ENCODE measurements at regions of chr5 and their contacts with region 1.

Region 1: DNA sequence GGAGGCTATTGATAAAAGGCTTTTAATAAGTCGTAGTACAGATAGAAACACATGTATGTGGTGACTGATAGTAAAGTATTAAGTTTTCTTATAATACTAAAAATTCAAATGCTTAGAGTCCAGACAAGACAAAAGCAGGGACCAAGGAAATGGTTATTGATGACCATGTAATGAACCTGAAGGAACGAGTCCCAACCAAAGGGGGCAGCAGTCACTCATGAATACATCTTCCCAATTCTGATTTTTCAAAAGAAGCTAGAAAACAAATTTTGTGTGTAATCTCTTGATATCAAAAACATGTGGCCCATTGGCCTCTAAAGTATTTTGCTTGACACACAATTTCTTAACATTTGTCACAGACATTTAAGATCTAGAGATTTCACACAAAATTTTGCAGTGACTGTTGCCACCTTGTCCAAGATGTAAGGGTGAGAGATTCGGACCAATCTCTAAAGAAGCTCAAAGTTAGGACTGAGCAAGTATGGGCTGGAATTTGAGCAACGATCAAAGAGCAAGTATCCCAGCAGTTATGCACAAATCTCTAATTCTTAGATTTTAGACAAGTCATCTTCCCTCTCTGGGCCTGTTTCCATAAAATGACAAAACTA is 66.8 kb downstream of the ARL15 start:
- DNase-seq: peak; percentile 63
- H3K4me3 ChIP-seq: no peak overlapping the region
- H3K27ac ChIP-seq: no peak overlapping the region
- H3K4me1 ChIP-seq: no peaks in the 10 kb centered on the region
- H3K27me3 ChIP-seq: no peaks in the 10 kb centered on the region
- CTCF ChIP-seq: peak; percentile 84

Region 2: GRCh38 chr5:53631251-53631650 is 612.3 kb before region 1 on chr5:
- CTCF ChIA-PET with region 1: no interaction called
- POLR2A ChIA-PET with region 1: no interaction called
- intact Hi-C with region 1: no loop called
- DNase-seq: no peak
- H3K4me3 ChIP-seq: no peak overlapping the region
- H3K27ac ChIP-seq: no peak overlapping the region
- H3K4me1 ChIP-seq: no peaks in the 10 kb centered on the region
- H3K27me3 ChIP-seq: no peaks in the 10 kb centered on the region
- CTCF ChIP-seq: no peak

Region 3: DNA sequence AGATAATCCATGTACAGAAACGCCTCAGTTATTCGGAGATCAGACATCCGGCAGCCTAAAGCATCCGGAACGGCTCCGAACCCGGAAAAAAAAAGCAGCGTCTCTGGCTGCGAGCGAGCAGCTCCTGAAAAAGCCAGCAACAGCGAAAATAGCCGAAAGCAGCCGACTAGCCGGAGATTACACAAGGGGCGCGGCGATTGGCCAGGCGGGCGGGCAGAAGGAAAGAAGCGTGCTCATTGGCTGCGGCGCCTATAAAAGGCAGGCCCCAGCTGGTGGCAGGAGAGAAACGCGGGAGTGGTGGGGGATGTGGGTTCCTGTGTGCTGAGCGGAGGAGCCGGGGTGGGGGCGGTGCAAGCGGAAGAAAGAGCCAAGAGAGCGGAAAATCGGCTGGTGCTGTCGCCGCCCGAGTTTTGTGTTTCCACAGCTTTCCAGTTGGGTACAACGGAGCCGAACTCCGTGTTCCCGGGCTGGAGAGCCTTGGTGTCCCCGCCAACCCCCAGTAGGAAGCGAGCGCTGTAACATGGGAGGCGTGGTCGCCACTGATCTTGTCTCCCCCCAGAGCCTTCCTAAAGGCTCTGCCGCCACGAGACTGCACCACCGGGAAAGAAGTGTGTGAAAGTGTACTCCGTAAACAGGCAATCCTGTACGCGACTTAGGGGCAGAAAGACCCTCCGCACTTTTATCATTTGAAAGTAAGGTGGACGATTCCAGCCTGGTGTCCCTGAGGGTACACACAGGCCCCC is 67.0 kb after region 1 on chr5 and contains the start of gene ARL15:
- CTCF ChIA-PET with region 1: interaction called, 4 read pairs
- POLR2A ChIA-PET with region 1: interaction called, 10 read pairs
- intact Hi-C with region 1: no loop called
- DNase-seq: peak; percentile 99
- H3K4me3 ChIP-seq: peak within 1 kb of the TSS; percentile 69
- H3K27ac ChIP-seq: peak within 1 kb of the TSS; percentile 76
- H3K4me1 ChIP-seq: no peaks in the 10 kb centered on the region
- H3K27me3 ChIP-seq: no peaks in the 10 kb centered on the region
- CTCF ChIP-seq: no peak
- total RNA-seq, gene ARL15: 17.2 and 18.3 TPM in 2 replicates

Region 4: GRCh38 chr5:54415896-54416601 is 172.5 kb after region 1 on chr5:
- CTCF ChIA-PET with region 1: interaction called, 18 read pairs
- POLR2A ChIA-PET with region 1: no interaction called
- intact Hi-C with region 1: loop called (anchors 2 kb)
- DNase-seq: no peak
- H3K4me3 ChIP-seq: no peak overlapping the region
- H3K27ac ChIP-seq: no peak overlapping the region
- H3K4me1 ChIP-seq: no peaks in the 10 kb centered on the region
- H3K27me3 ChIP-seq: no peaks in the 10 kb centered on the region
- CTCF ChIP-seq: no peak

Region 5: DNA sequence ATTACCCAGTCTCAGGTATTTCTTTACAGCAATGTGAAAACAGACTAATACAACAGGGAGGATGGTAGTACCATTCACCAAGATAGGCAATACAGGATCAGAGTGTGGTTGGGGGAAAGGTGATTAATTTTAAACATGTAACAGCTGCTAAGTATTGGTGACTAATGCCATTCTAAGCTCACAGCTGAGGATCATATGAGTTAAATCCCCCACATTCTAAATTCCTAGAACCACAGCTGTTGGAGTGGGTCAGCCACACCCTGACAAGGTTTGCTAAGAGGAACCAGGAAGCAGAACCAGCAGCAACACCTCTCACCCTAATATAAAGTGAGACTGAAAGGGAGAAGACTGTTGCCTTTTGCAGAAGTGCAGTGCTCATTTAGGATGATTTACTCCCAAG is 236.7 kb after region 1 on chr5:
- CTCF ChIA-PET with region 1: no interaction called
- POLR2A ChIA-PET with region 1: no interaction called
- intact Hi-C with region 1: loop called (anchors 5 kb)
- DNase-seq: no peak
- H3K4me3 ChIP-seq: no peak overlapping the region
- H3K27ac ChIP-seq: no peak overlapping the region
- H3K4me1 ChIP-seq: no peaks in the 10 kb centered on the region
- H3K27me3 ChIP-seq: no peaks in the 10 kb centered on the region
- CTCF ChIP-seq: no peak

Region 6: DNA sequence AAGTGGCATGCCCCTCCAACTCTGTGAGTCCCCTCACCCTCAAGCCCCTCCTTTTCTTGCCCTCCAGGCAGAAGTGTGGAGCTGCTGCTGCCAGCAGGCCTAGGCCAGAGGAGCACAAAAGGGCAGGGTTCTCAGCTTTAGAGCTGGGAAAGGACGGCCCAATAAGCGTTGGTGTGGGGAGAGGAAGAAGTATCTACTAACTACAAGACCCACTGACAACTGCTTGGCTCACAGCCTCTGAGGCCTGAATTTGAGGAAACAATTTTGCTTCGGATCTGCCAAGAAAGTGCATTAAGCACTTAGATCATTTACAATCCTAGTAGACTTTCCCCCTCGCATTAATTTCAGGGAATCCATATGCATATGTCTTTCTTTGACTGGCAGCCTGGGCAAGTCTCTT is 453.4 kb after region 1 on chr5:
- CTCF ChIA-PET with region 1: no interaction called
- POLR2A ChIA-PET with region 1: no interaction called
- intact Hi-C with region 1: no loop called
- DNase-seq: peak; percentile 63
- H3K4me3 ChIP-seq: no peak overlapping the region
- H3K27ac ChIP-seq: peak overlapping the region; percentile 41
- H3K4me1 ChIP-seq: peaks cover 51% of the 10 kb centered on the region
- H3K27me3 ChIP-seq: no peaks in the 10 kb centered on the region
- CTCF ChIP-seq: no peak

Region 7: GRCh38 chr5:54867310-54867944 is 623.9 kb after region 1 on chr5:
- CTCF ChIA-PET with region 1: interaction called, 15 read pairs
- POLR2A ChIA-PET with region 1: no interaction called
- intact Hi-C with region 1: no loop called
- DNase-seq: peak; percentile 87
- H3K4me3 ChIP-seq: no peak overlapping the region
- H3K27ac ChIP-seq: peak overlapping the region; percentile 2
- H3K4me1 ChIP-seq: peaks cover 9% of the 10 kb centered on the region
- H3K27me3 ChIP-seq: no peaks in the 10 kb centered on the region
- CTCF ChIP-seq: peak; percentile 78

Region 8: DNA sequence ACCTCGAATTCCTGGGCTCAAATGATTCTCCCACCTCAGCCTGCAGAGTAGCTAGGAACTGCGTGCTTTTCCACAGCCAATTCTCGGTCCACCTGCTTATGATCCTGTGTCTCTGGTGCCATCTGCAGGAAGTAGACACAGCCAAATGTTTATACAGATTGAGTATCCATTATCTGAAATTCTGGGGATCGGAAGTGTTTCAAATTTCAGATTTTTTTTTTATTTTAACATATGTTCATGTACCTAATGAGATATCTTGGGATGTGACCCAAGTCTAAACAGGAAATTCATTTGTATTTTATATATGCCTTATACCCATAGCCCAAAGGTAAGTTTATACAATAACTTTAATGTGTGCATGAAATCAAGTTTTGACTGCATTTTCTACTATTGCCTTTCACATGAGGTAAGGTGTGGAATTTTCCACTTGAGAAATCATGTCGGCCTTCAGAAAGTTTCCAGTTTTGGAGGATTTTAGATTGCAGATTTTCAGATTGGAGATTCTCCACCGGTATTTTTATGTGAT is 652.3 kb after region 1 on chr5:
- CTCF ChIA-PET with region 1: interaction called, 12 read pairs
- POLR2A ChIA-PET with region 1: no interaction called
- intact Hi-C with region 1: loop called (anchors 5 kb)
- DNase-seq: peak; percentile 86
- H3K4me3 ChIP-seq: no peak overlapping the region
- H3K27ac ChIP-seq: peak overlapping the region; percentile 74
- H3K4me1 ChIP-seq: peaks cover 16% of the 10 kb centered on the region
- H3K27me3 ChIP-seq: no peaks in the 10 kb centered on the region
- CTCF ChIP-seq: peak; percentile 78

Region 9: DNA sequence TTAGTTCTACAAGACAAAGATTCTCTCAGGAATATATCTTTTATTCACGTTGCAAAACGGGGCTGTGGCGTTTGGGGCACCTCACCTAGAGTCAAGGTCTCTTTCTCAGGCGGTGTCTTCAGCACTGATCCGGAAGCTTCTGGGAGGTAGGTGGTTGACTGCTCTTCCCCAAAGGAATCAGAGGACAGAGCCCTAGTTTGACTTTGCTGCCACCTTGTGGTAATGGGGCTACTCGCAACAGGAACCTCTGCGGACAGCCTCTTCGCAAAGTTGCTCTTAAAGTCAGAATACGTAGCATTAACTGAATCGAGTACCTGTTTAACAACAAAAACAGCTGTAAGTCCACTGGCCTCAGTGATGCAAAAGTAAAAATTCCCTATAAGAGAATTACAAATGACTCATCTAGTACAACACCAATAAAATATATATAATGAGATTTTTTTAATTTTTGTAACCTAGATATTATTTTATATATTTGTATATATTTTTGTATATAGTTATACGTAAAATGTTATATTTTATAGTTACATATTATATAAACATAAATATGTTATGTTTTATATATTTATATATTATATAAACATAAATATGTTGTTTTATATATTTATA is 903.1 kb after region 1 on chr5:
- CTCF ChIA-PET with region 1: no interaction called
- POLR2A ChIA-PET with region 1: no interaction called
- intact Hi-C with region 1: loop called (anchors 5 kb)
- DNase-seq: peak; percentile 91
- H3K4me3 ChIP-seq: no peak overlapping the region
- H3K27ac ChIP-seq: no peak overlapping the region
- H3K4me1 ChIP-seq: no peaks in the 10 kb centered on the region
- H3K27me3 ChIP-seq: peaks cover 27% of the 10 kb centered on the region
- CTCF ChIP-seq: peak; percentile 94